CD4-positive, alpha-beta memory T cell (primary cell): ENCODE measurements at regions of chr2 and their contacts with region 1.

Region 1: GRCh38 chr2:94956797-94957391 is 68.6 kb upstream of the MAL start:
- DNase-seq: peak in 4 of 5 donors; percentile 7 to 21 (median 18)
- H3K4me3 ChIP-seq: no peak overlapping the region
- H3K4me3 Mint-ChIP-seq: no peak overlapping the region
- H3K27ac ChIP-seq: no peak overlapping the region
- H3K27ac Mint-ChIP-seq: no peak overlapping the region
- H3K4me1 ChIP-seq: no peaks in the 10 kb centered on the region
- H3K4me1 Mint-ChIP-seq: no peaks in the 10 kb centered on the region
- H3K27me3 ChIP-seq: no peaks in the 10 kb centered on the region
- H3K27me3 Mint-ChIP-seq: peaks cover 27 to 36% of the 10 kb centered on the region in 2 donors

Region 2: GRCh38 chr2:94939349-94939748 is 17.5 kb before region 1 on chr2:
- CTCF ChIA-PET with region 1: interaction called, 16 read pairs
- POLR2A ChIA-PET with region 1: no interaction called
- intact Hi-C with region 1: no loop called
- DNase-seq: no peak
- H3K4me3 ChIP-seq: no peak overlapping the region
- H3K4me3 Mint-ChIP-seq: no peak overlapping the region
- H3K27ac ChIP-seq: no peak overlapping the region
- H3K27ac Mint-ChIP-seq: no peak overlapping the region
- H3K4me1 ChIP-seq: no peaks in the 10 kb centered on the region
- H3K4me1 Mint-ChIP-seq: no peaks in the 10 kb centered on the region
- H3K27me3 ChIP-seq: no peaks in the 10 kb centered on the region
- H3K27me3 Mint-ChIP-seq: peaks cover 9 to 13% of the 10 kb centered on the region in 2 donors

Region 3: DNA sequence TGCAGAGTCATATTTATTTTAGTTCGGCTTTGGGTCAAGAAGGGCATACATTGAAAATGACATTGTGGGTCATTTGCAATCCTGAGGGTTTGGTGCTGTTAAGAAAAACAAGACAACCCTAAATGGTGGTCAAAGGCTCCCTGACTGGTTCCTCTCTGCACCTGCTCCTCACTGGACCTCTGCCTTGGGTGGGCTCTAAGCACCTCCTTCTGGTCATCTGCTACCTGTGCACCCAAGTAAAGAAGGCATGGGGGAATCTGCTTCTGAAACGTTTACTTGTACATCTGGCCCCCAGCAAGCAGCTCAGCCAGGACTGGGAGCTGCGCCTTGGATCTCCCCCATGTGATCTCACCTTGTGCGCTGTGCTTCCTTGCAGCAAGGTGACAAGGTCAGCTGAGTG is 13.5 kb after region 1 on chr2:
- CTCF ChIA-PET with region 1: interaction called, 17 read pairs
- POLR2A ChIA-PET with region 1: no interaction called
- intact Hi-C with region 1: no loop called
- DNase-seq: no peak
- H3K4me3 ChIP-seq: no peak overlapping the region
- H3K4me3 Mint-ChIP-seq: no peak overlapping the region
- H3K27ac ChIP-seq: no peak overlapping the region
- H3K27ac Mint-ChIP-seq: no peak overlapping the region
- H3K4me1 ChIP-seq: no peaks in the 10 kb centered on the region
- H3K4me1 Mint-ChIP-seq: no peaks in the 10 kb centered on the region
- H3K27me3 ChIP-seq: no peaks in the 10 kb centered on the region
- H3K27me3 Mint-ChIP-seq: peaks cover 20 to 31% of the 10 kb centered on the region in 2 donors